Dendritic cell treated with granulocyte-macrophage colony-stimulating factor and Interleukin-4, amounts not matched to agents 40 ng/mL and 50 ng/mL, for 4 days (primary cell): ENCODE measurements at regions of chr14 and their contacts with region 1.

Region 1: GRCh38 chr14:31400031-31400638 is 20.2 kb downstream of the HEATR5A start:
- H3K4me3 Mint-ChIP-seq: no peak overlapping the region
- H3K27ac Mint-ChIP-seq: no peak overlapping the region
- H3K4me1 Mint-ChIP-seq: no peaks in the 10 kb centered on the region
- H3K27me3 Mint-ChIP-seq: no peaks in the 10 kb centered on the region

Region 2: DNA sequence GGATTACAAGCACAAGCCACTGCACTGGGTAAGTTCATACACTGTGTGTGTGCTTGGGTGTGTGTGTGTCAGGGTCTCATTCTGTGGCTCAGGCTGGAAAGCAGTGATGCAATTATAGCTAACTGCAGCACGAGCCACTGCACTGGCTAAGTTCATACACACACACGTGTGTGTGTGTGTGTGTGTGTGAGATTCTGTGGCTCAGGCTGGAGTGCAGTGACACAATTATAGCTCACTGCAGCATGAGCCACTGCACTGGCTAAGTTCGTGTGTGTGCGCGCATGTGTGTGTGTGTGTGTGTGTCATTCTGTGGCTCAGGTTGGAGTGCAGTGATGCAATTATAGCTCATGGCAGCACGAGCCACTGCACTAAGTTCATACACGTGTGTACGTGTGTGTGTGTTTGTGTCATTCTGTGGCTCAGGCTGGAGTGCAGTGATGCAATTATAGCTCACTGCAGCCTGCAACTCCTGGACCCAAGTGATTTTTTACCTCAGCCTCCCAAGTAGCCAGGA is 278.0 kb before region 1 on chr14:
- intact Hi-C with region 1: no loop called
- H3K4me3 Mint-ChIP-seq: no peak overlapping the region
- H3K27ac Mint-ChIP-seq: no peak overlapping the region
- H3K4me1 Mint-ChIP-seq: no peaks in the 10 kb centered on the region
- H3K27me3 Mint-ChIP-seq: no peaks in the 10 kb centered on the region

Region 3: DNA sequence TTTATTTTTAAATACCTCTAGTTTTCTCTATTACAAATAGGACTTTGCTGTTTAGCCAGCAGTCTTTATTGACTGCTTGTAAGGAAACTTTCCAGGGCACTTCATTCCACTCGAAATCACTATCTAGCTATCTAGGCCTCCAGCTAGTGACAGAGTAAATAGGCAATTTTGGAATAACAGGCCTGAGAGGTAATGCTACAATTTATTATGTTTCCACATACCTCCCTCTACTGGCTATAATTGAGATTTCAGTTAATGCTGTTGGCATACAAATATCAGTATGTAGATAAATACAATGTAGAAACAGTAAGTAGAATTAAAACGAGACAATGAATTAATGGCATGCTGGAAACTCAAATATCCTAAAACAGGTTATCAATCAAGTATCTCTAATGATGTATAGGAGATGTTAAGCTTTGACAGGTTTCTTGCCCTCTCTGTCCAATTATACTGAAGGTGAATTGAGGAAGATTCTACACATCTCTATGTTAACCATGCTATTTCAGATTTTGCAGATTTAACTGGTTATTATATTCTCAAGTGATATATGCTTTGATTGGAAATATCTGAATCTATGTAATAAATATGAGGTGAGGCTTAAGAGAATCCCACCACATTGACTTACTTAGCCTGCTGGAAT is 50.0 kb after region 1 on chr14:
- intact Hi-C with region 1: loop called (anchors 1 kb)
- H3K4me3 Mint-ChIP-seq: no peak overlapping the region
- H3K27ac Mint-ChIP-seq: no peak overlapping the region
- H3K4me1 Mint-ChIP-seq: peaks cover 4% of the 10 kb centered on the region
- H3K27me3 Mint-ChIP-seq: no peaks in the 10 kb centered on the region